ENCODE measurements at regions of chr15 and their contacts with region 1.

Region 1: DNA sequence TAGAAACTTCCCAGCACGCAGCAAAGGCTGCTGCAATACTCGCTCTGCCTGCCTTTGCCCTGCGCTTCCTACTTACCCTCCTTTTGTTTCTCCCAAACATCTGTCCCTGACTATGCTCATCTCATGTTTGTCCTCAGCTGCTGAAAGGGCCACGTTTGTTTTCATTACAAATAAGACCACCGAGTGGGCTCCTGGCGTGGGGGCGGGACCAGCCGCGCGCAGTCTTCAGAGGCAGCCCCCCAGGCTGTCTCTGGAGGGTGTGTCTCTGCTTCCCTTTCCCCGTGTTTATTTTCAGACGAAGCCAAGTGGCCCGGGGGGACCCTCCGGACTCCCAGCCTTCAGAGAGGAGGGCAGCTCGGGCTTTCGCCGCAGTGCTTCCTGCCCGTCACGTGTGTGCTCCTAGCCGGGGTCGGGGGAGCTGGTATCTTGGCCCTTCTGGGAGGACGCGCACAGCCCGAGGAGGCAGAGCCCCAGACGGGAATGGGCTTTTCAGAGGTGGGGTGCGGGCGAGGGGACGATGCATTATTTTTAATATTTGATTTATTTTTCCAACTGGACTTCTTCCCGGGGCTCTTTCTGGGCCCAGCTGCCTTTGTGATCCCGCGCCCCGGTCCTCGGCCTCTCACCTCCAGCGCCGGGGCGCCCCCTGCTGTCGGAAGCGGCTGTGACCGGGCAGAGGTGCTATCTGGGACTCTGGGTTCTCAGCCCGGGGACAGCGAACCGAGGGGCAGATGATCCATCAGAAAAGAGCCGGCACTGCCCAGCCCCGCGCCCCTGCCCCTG is 70.0 kb upstream of the CGNL1 start:
- DNase-seq: peak; percentile 53
- H3K4me3 ChIP-seq: peak overlapping the region; percentile 33 to 39 (median 35)
- H3K27ac ChIP-seq: peak overlapping the region; percentile 32
- H3K4me1 ChIP-seq: peaks cover 11% of the 10 kb centered on the region
- H3K27me3 ChIP-seq: no peaks in the 10 kb centered on the region
- CTCF ChIP-seq: peak; percentile 90 to 91
- POLR2A ChIP-seq: no peak

Region 2: GRCh38 chr15:57017024-57017423 is 289.3 kb before region 1 on chr15:
- CTCF ChIA-PET with region 1: no interaction called
- POLR2A ChIA-PET with region 1: no interaction called
- dilution Hi-C with region 1: no loop called
- intact Hi-C with region 1: loop called (anchors 5 kb)
- DNase-seq: peak; percentile 44
- H3K4me3 ChIP-seq: no peak overlapping the region
- H3K27ac ChIP-seq: no peak overlapping the region
- H3K4me1 ChIP-seq: peaks cover 6% of the 10 kb centered on the region
- H3K27me3 ChIP-seq: no peaks in the 10 kb centered on the region
- CTCF ChIP-seq: peak in 1 of 2 donors; percentile 12
- POLR2A ChIP-seq: no peak

Region 3: DNA sequence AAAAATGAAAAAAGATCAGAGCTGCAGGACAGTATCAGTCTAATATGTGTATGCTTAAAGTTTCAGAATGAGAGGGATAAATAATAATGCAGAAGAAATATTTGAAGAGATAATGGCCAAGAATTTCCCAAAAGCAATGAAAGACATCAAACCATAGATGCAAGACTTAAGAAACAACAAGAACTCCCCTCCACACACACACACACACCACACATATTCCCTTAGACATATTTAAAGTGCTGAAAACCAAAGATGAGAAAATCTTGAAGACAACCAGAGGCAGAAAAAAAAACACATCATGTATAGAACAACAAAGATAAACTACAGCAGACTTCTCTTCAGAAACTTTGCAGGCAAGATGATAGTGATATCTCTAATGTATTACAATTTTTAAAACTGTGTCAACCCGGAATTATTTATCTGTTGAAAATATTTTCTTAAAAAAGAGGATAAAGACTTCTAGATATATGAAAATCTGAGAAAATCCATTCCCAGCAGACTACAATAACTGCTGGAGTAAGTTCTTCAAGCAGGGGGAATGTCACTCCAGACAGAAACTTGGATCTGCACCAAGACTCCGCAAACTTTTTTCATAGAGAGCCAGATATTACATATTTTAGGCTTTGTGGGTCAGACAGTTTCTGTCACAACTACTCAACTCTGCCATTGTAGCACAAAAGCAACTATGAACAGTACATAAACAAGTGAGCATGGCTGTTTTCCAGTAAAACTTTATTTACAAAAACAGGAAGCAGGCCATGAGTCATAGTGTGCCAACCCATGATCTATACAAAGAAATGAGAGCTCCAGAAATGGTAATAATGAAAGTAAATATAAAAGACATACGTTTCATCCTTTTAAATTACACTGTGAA is 153.4 kb before region 1 on chr15:
- CTCF ChIA-PET with region 1: interaction called, 93 read pairs
- POLR2A ChIA-PET with region 1: no interaction called
- dilution Hi-C with region 1: no loop called
- intact Hi-C with region 1: no loop called
- DNase-seq: peak; percentile 91
- H3K4me3 ChIP-seq: peak overlapping the region in 1 of 3 experiments; percentile 48
- H3K27ac ChIP-seq: peak overlapping the region; percentile 70
- H3K4me1 ChIP-seq: peaks cover 33% of the 10 kb centered on the region
- H3K27me3 ChIP-seq: no peaks in the 10 kb centered on the region
- CTCF ChIP-seq: no peak
- POLR2A ChIP-seq: no peak

Region 4: DNA sequence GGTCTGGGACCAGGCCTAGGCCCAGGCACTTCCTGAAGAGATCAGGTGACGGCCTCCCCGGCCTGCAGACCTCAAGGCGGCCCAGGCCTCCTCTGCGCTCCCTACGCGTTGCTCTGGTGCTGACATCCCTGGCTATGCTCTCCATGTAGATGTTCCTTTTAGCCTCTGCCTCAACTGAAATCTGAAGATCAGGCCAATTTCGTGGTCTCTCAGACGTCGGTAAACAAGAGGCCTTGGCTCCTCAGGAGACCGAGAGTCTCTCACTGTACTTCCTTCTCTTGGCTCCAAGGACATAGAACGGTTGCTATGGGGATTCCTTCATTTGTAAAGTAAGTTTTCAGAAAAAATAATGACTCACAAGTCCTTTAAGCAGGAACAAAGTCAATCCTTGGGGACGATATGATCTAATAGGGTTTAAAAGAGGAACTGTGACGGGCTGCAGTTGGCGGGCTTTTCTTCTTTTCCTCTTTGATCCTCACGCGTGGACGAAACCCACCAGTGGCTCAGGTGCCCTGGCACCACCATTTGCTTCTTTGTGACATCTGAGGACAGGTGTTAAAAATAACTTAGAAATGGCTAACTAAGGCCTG is 14.4 kb after region 1 on chr15:
- CTCF ChIA-PET with region 1: interaction called, 13 read pairs
- POLR2A ChIA-PET with region 1: no interaction called
- dilution Hi-C with region 1: no loop called
- intact Hi-C with region 1: no loop called
- DNase-seq: peak; percentile 74
- H3K4me3 ChIP-seq: no peak overlapping the region
- H3K27ac ChIP-seq: peak overlapping the region; percentile 83
- H3K4me1 ChIP-seq: peaks cover 35% of the 10 kb centered on the region
- H3K27me3 ChIP-seq: no peaks in the 10 kb centered on the region
- CTCF ChIP-seq: no peak
- POLR2A ChIP-seq: no peak

Region 5: GRCh38 chr15:57364282-57365007 is 58.1 kb after region 1 on chr15:
- CTCF ChIA-PET with region 1: no interaction called
- POLR2A ChIA-PET with region 1: no interaction called
- dilution Hi-C with region 1: no loop called
- intact Hi-C with region 1: no loop called
- DNase-seq: peak; percentile 14
- H3K4me3 ChIP-seq: no peak overlapping the region
- H3K27ac ChIP-seq: no peak overlapping the region
- H3K4me1 ChIP-seq: no peaks in the 10 kb centered on the region
- H3K27me3 ChIP-seq: no peaks in the 10 kb centered on the region
- CTCF ChIP-seq: peak in 1 of 2 donors; percentile 23
- POLR2A ChIP-seq: no peak

Region 6: DNA sequence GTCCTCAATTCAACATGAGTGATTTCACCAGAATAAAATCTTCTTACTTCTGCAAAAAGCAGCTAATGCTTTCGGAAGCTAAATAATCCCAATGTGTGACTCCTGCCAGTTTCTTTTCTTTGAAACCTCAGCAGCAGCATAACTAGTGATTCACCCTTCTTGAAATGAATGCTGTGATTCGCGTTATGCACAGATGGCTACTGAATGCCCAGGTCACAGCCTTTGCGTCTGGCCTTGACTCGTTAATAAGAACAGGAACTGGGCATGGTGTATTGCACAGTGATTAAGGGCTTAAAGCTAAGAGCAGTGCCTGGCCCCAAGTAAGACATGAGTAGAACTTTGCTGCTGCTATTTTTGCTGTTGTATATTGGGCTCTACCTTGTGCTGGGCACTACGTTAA is 88.9 kb after region 1 on chr15:
- CTCF ChIA-PET with region 1: no interaction called
- POLR2A ChIA-PET with region 1: no interaction called
- dilution Hi-C with region 1: no loop called
- intact Hi-C with region 1: no loop called
- DNase-seq: peak; percentile 91
- H3K4me3 ChIP-seq: no peak overlapping the region
- H3K27ac ChIP-seq: no peak overlapping the region
- H3K4me1 ChIP-seq: peaks cover 56% of the 10 kb centered on the region
- H3K27me3 ChIP-seq: no peaks in the 10 kb centered on the region
- CTCF ChIP-seq: no peak
- POLR2A ChIP-seq: no peak